Activated T-helper 2 cell treated with anti-CD3 and anti-CD28 coated beads, Interferon-gamma antibody, Interleukin-2, Interleukin-4, amounts not matched to agents 10 μg/mL and 5 μg/mL and 100 μg/mL, durations not matched to agents 14 hours and 24 hours and 36 hours (primary cell): ENCODE measurements at regions of chr11 and their contacts with region 1.

Region 1: DNA sequence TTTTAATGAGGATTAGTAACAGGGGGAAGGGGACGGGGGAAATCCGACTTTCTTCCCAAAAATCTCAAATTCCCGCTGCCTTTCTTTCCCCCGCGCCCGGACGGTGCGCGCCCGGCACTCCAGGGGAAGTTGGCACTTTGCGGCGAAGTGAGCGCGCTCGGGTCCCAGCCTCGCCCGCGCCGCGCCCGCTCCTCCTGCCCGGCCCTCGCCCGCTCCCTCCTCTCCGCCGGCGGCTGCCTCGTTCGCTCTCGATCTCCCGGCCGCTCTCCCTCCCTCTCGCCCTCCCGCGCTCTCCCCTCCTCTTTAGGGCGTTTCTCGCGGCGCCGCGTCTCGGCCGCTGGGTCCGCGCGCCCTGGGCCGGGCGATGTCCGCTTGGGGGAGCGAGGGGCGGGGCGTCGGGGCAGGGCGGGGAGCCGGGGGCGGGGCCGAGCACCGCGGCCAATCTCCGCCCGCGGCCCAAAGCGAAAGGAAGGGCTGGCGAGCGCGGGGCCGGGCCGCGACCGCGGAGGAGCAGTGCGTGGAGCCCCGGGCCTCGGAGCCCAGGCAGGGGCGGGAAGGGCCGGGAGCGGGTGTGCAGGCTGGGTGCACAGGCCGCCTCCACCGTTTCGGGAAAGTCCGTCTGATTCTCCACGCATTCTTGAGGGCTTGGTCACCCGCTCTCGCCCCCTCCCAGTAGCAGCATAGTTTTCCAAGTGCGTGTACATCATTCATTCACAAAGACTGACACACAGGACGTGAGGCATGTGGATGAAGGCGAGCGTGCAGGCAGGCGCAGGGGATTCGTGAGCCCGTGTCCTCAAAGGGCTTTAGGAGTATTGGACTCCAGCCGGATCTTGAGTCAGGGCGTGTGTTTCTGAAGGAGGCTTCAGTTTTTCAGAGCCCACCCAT is 65.1 kb downstream of the ETS1 start:
- DNase-seq: peak; percentile 90
- H3K4me3 Mint-ChIP-seq: peak overlapping the region; percentile 97
- H3K27ac Mint-ChIP-seq: peak overlapping the region; percentile 97
- H3K4me1 Mint-ChIP-seq: peaks cover 51% of the 10 kb centered on the region
- H3K27me3 Mint-ChIP-seq: no peaks in the 10 kb centered on the region

Region 2: GRCh38 chr11:128052912-128053641 is 469.2 kb before region 1 on chr11:
- intact Hi-C with region 1: loop called (anchors 5 kb)
- DNase-seq: no peak
- H3K4me3 Mint-ChIP-seq: peak overlapping the region; percentile 48
- H3K27ac Mint-ChIP-seq: peak overlapping the region; percentile 76
- H3K4me1 Mint-ChIP-seq: peaks cover 56% of the 10 kb centered on the region
- H3K27me3 Mint-ChIP-seq: no peaks in the 10 kb centered on the region

Region 3: GRCh38 chr11:128302425-128303186 is 219.7 kb before region 1 on chr11:
- intact Hi-C with region 1: loop called (anchors 1 kb)
- DNase-seq: peak; percentile 82
- H3K4me3 Mint-ChIP-seq: peak overlapping the region; percentile 90
- H3K27ac Mint-ChIP-seq: peak overlapping the region; percentile 96
- H3K4me1 Mint-ChIP-seq: peaks cover 71% of the 10 kb centered on the region
- H3K27me3 Mint-ChIP-seq: no peaks in the 10 kb centered on the region

Region 4: DNA sequence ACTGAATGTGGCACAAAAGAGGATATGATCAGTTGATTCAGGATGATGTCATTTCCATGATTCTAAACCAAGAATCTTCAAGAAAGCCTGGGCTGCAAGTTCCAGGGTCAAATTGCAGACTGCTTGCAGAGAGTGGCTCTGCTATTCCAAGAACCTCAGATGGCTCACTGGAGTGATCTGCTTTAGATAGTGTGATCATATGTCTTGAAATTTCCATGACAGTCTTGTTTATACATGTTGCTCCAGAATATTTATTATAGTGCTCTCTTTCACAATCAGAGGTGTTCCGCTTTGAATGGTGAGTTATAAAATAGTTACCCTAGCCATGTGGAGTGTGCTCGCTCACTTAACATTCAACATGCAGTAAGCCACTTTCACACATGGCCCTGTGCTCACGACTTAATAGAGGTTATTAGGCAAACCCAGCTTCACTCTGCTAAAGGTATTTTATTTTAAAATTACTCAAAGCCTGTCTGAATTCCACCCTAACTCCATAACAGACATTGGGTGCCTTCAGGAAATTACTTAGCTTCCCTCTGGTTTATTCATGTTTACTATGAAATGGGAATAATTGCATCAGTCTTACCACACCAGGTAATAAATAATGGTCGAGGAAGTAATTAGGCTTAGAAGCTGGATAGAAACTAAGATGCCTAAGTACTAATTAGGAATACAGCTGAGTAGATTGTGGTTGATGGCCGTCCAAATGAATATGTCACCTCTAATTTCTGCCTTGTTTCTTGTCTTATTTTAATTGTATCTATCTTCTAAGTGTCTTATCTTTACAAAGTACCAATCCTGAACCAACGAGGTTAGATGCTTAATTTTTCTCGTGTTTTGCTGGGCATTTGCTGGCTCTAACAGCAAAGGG is 122.8 kb before region 1 on chr11:
- intact Hi-C with region 1: no loop called
- DNase-seq: no peak
- H3K4me3 Mint-ChIP-seq: no peak overlapping the region
- H3K27ac Mint-ChIP-seq: no peak overlapping the region
- H3K4me1 Mint-ChIP-seq: peaks cover 16% of the 10 kb centered on the region
- H3K27me3 Mint-ChIP-seq: no peaks in the 10 kb centered on the region

Region 5: DNA sequence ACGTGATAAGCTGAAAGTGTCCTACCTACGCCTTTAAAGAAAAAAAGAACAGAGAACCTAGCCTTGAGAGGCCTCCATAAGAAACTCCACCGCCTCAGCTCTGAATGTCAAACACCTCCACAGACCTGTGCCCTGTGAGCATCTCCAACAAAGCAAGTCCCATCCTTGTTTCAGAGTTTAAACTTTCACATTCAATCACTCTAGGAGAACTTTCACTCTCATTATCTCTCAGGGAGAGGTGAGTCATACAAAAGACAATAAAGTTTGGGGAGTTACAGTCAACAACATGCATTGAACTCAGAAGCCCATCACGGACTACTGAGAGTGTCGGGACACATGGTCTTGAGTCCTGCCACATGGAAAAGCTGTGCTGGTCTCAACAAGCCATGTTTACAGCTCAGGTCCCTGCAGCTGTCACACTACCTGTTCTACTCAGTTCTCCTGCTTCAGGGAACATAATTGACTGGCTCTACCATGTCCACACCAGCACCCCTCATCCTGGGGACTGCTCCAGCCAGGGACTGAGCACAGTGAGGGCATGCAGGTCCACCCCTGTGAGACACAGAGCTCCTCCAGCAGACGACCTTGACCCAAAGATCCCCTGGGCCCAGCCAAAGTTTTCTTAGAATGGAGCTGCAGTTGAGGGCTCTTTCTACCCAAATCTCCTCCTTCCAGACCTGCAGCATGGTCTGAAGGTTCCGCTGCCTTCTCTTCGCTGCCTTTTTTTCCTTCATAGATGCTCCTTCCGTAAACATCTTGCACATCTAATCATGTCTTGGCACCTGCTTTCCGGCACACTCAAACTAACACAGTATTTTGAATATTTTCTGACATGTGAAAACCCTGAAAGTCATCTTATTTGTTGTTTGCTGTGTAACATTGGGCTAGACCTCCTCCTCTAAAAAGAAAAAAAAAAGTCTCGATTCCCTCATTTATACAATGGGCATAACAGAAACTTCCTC is 49.9 kb before region 1 on chr11:
- intact Hi-C with region 1: loop called (anchors 2 kb)
- DNase-seq: peak; percentile 62
- H3K4me3 Mint-ChIP-seq: peak overlapping the region; percentile 75
- H3K27ac Mint-ChIP-seq: peak overlapping the region; percentile 95
- H3K4me1 Mint-ChIP-seq: peaks cover 94% of the 10 kb centered on the region
- H3K27me3 Mint-ChIP-seq: no peaks in the 10 kb centered on the region

Region 6: DNA sequence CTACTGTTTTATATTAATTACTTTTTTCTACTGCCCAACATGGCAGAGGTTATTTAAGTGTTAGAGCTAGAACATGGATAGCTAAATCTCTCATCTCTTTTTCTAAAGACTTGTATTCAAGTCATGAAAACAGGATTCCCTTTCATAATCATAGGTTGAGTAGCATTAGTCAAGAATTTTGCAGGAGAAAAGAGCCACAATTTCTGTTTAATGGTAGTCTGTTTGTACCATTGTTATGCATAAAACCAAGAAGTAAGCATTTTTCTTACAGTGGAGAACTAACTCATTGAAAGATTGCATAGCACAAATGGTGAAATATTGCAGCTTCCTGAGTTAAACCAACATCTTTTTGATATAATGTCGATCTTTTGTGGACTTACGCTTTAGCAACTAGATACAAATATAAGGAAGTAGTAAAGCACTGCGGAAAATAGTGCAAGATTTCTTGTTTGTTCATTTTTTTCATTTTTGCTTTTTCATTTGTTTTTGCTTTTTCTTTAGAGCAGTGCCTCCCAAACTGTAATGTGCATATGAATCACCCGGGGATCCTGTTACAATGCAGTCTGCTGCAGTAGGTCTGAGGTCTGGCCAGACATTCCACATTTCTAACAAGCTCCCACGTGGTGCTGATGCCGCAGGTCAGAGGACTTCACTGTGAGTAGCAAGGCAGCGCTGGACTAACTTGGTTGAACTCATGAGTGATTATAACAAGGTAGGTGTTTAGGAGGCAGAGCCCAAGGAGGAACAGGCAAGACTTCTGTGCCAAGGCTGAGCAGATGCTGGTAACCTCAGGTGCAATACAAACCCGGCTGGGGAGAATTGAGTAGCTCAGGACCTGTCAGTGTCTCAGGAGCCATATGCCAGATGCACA is 60.4 kb after region 1 on chr11:
- intact Hi-C with region 1: loop called (anchors 1 kb)
- DNase-seq: no peak
- H3K4me3 Mint-ChIP-seq: no peak overlapping the region
- H3K27ac Mint-ChIP-seq: no peak overlapping the region
- H3K4me1 Mint-ChIP-seq: peaks cover 26% of the 10 kb centered on the region
- H3K27me3 Mint-ChIP-seq: peaks cover 15% of the 10 kb centered on the region

Region 7: GRCh38 chr11:128695539-128696221 is 173.4 kb after region 1 on chr11:
- intact Hi-C with region 1: loop called (anchors 5 kb)
- DNase-seq: no peak
- H3K4me3 Mint-ChIP-seq: peak overlapping the region; percentile 80
- H3K27ac Mint-ChIP-seq: peak overlapping the region; percentile 87
- H3K4me1 Mint-ChIP-seq: peaks cover 63% of the 10 kb centered on the region
- H3K27me3 Mint-ChIP-seq: peaks cover 15% of the 10 kb centered on the region